Naive thymus-derived CD8-positive, alpha-beta T cell (primary cell): ENCODE measurements at regions of chr19 and their contacts with region 1.

Region 1: GRCh38 chr19:14218620-14219330 is 12.8 kb upstream of the ADGRL1 start:
- DNase-seq: peak in 1 of 10 donors; percentile 19
- ATAC-seq: no peak
- H3K4me3 Mint-ChIP-seq: no peak overlapping the region
- H3K27ac Mint-ChIP-seq: peak overlapping the region in 3 of 10 donors; percentile 19 to 69 (median 22)
- H3K4me1 Mint-ChIP-seq: peaks cover 13 to 17% (median 16%) of the 10 kb centered on the region in 4 donors
- H3K27me3 Mint-ChIP-seq: no peaks in the 10 kb centered on the region

Region 2: GRCh38 chr19:14189415-14189814 is 29.4 kb before region 1 on chr19:
- POLR2A ChIA-PET with region 1: interaction called, 10 read pairs
- DNase-seq: no peak
- ATAC-seq: no peak
- H3K4me3 Mint-ChIP-seq: no peak overlapping the region
- H3K27ac Mint-ChIP-seq: no peak overlapping the region
- H3K4me1 Mint-ChIP-seq: peaks cover 13 to 19% (median 16%) of the 10 kb centered on the region in 4 donors
- H3K27me3 Mint-ChIP-seq: no peaks in the 10 kb centered on the region